ENCODE measurements at regions of chr11 and their contacts with region 1.

Region 1: DNA sequence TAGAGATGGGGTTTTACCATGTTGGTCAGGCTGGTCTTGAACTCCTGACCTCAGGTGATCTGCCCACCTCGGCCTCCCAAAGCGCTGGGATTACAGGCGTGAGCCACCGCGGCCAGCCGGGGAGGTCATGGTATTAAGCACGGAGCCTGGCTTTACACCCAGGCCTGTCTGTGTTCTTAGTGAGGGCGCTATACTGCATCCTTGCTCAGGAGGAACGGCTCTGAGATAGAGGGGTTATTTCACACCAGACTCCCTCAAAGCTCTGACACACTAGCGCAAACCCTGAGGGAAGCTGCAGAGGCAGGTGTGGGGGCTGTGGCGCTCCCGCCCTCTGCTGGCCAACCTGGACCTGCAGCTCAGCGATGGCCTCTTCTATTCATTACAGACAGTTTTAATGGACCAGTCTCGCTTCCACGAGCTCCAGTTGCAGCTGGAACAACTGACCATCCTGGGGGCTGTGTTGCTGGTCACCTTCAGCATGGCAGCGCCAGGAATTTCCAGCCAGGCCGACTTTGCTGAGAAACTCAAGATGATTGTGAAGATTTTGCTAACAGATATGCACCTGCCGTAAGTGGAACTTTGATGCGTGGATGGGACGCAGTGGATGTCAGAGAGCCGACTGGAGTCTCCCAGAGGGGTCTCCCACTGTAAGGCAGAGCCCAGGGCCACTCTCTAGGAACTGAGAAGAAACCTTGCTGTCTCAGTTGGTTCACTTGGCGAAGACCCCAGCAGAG is 26.2 kb downstream of the TCP11L1 start:
- DNase-seq: peak; percentile 52
- H3K4me3 ChIP-seq: no peak overlapping the region
- H3K27ac ChIP-seq: no peak overlapping the region
- H3K4me1 ChIP-seq: peaks cover 41% of the 10 kb centered on the region
- H3K27me3 ChIP-seq: no peaks in the 10 kb centered on the region
- CTCF ChIP-seq: peak; percentile 87 to 92

Region 2: GRCh38 chr11:32809313-32809712 is 256.3 kb before region 1 on chr11:
- CTCF ChIA-PET with region 1: no interaction called
- dilution Hi-C with region 1: no loop called
- in situ Hi-C with region 1: loop called in 1 of 2 experiments (anchors 25 kb)
- intact Hi-C with region 1: loop called (anchors 1 kb)
- DNase-seq: peak; percentile 67
- H3K4me3 ChIP-seq: no peak overlapping the region
- H3K27ac ChIP-seq: no peak overlapping the region
- H3K4me1 ChIP-seq: no peaks in the 10 kb centered on the region
- H3K27me3 ChIP-seq: no peaks in the 10 kb centered on the region
- CTCF ChIP-seq: peak; percentile 90 to 92

Region 3: GRCh38 chr11:32960553-32961164 is 105.0 kb before region 1 on chr11:
- CTCF ChIA-PET with region 1: no interaction called
- dilution Hi-C with region 1: no loop called
- in situ Hi-C with region 1: loop called (anchors 5 to 10 kb)
- intact Hi-C with region 1: loop called (anchors 1 kb)
- DNase-seq: peak; percentile 40
- H3K4me3 ChIP-seq: no peak overlapping the region
- H3K27ac ChIP-seq: no peak overlapping the region
- H3K4me1 ChIP-seq: no peaks in the 10 kb centered on the region
- H3K27me3 ChIP-seq: no peaks in the 10 kb centered on the region
- CTCF ChIP-seq: peak; percentile 50 to 63

Region 4: GRCh38 chr11:33000181-33000580 is 65.4 kb before region 1 on chr11:
- CTCF ChIA-PET with region 1: no interaction called
- dilution Hi-C with region 1: loop called (anchors 5 kb)
- in situ Hi-C with region 1: no loop called
- intact Hi-C with region 1: no loop called
- DNase-seq: peak; percentile 30
- H3K4me3 ChIP-seq: no peak overlapping the region
- H3K27ac ChIP-seq: no peak overlapping the region
- H3K4me1 ChIP-seq: peaks cover 15% of the 10 kb centered on the region
- H3K27me3 ChIP-seq: no peaks in the 10 kb centered on the region
- CTCF ChIP-seq: no peak

Region 5: DNA sequence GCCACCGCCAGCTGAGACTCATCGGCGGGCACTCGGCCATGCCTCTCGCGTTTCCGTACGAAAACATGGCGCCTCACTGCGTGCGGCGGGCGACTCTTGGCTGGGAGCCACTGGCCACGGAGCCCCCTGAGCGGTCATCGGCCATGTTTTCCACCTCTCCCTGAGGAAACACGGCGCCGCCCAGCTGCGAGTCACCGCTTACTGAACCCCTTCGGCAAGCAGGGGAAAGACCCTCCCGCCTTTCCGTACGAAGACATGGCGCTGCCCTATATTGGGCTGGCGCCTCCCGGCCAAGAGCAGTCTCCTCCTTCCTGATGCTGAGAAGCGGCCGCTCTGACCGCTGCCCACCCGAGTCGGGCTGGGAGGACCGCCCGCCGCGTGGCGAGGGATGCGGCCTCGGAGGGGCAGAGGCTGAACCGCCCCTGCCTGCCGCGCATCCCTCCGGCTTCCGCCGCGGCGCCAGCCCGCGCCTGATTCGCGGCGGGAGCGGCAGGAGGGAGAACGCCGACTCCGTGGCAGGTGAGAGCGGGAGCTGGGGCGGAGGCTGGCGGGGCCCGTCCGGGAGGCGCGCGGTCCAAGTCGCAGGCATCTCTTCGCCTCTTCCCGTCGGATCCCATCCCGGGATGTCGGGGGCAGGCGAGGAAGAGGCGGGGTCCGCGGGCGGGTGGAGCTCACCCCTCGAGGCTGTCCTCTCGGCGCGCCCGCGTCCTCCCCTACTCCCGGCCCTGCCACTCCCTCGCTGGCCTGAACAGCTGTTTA is 26.2 kb before region 1 on chr11 and contains the start of gene TCP11L1:
- CTCF ChIA-PET with region 1: interaction called, 6 read pairs
- dilution Hi-C with region 1: no loop called
- in situ Hi-C with region 1: no loop called
- intact Hi-C with region 1: loop called (anchors 1 kb)
- DNase-seq: peak; percentile 91
- H3K4me3 ChIP-seq: peak within 1 kb of the TSS; percentile 63 to 90 (median 68)
- H3K27ac ChIP-seq: peak within 1 kb of the TSS; percentile 92
- H3K4me1 ChIP-seq: peaks cover 25% of the 10 kb centered on the region
- H3K27me3 ChIP-seq: no peaks in the 10 kb centered on the region
- CTCF ChIP-seq: no peak
- total RNA-seq, gene TCP11L1: 32.0 to 51.2 TPM

Region 6: DNA sequence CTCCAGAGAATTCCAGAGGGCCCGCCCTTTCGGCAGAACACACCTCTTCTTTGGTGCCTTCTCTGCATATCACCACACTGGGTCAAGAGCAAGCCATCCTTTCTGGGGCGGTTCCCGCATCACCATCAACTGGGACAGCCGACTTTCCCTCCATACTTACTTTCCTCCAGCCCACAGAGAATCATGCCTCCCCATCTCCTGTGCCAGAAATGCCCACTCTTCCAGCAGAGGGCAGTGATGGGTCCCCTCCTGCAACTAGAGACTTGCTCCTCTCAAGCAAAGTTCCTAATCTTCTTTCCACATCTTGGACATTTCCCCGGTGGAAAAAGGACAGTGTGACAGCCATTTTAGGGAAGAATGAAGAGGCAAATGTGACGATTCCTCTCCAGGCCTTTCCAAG is 477.3 kb after region 1 on chr11:
- CTCF ChIA-PET with region 1: no interaction called
- dilution Hi-C with region 1: no loop called
- in situ Hi-C with region 1: no loop called
- intact Hi-C with region 1: no loop called
- DNase-seq: peak; percentile 47
- H3K4me3 ChIP-seq: no peak overlapping the region
- H3K27ac ChIP-seq: no peak overlapping the region
- H3K4me1 ChIP-seq: peaks cover 8% of the 10 kb centered on the region
- H3K27me3 ChIP-seq: no peaks in the 10 kb centered on the region
- CTCF ChIP-seq: peak; percentile 84 to 88

Measured in mammary epithelial cell (primary cell).